HepG2 (cell line): ENCODE measurements at regions of chr3 and their contacts with region 1.

Region 1: DNA sequence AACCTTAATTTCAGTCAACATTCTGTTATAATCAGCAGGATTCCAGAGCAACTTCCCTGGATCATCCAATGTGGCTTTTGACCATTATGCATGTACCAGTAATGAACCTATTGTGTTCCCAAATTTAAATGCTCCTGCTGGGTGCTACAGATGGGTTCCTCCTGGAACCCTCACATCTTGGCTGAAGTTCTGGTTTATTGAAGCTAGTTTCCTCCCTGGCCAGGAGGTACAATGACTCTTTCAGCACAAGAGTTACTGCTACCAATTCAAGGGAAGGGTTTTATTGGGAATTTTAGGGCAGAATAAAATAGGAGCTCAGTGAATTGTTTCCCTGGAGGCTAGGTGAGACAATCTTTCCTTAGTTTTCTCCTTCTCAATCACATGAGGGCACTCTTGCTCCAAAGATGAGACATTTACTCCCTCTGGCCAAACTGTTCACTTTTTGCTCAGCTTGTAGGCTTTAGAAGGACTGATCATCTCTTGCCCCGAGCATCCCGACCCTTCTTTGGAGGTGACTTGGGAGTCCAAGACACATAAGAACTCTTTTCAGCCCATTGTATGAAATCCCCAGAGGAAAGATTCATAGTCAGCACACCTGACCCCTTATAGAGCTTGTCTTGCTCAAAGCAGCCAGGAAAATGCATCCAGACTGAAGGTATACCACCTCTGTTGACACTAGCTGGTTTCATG is 8.8 kb upstream of the NPHP3 start:
- DNase-seq: peak; percentile 33
- ATAC-seq: peak; percentile 84
- H3K4me3 ChIP-seq: no peak overlapping the region
- H3K27ac ChIP-seq: no peak overlapping the region
- H3K4me1 ChIP-seq: no peaks in the 10 kb centered on the region
- H3K27me3 ChIP-seq: no peaks in the 10 kb centered on the region; a peak in 1 of 5 replicates
- CTCF ChIP-seq: peak; percentile 69
- EP300 ChIP-seq: no peak
- POLR2A ChIP-seq: no peak
- RAD21 ChIP-seq: peak; percentile 58

Region 2: DNA sequence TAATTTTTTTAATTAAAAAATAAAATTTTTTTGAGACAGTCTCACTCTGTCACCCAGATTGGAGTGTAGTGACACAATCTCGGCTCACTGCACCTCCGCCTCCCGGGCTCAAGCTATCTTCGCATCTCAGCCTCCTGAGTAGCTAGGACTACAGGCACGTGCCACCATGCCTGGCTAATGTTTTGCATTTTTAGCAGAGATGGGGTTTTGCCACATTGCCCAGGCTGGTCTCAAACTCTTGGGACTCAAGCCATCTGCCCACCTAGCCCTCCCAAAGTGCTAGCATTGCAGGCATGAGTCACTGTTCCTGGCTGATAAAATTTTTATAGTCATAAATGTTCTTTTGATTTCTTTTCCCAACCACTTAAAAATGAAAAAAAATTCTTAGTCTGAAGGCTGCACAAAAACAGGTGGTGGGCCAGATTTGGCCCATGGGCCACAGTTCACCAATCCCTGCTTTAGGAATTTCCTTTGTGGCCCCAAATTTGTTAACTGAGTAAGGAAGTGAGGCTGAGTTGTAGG is 61.7 kb before region 1 on chr3:
- CTCF ChIA-PET with region 1: no interaction called
- POLR2A ChIA-PET with region 1: no interaction called
- in situ Hi-C with region 1: no loop called
- intact Hi-C with region 1: no loop called
- DNase-seq: no peak
- ATAC-seq: no peak
- H3K4me3 ChIP-seq: no peak overlapping the region
- H3K27ac ChIP-seq: no peak overlapping the region
- H3K4me1 ChIP-seq: peaks cover 23% of the 10 kb centered on the region
- H3K27me3 ChIP-seq: no peaks in the 10 kb centered on the region; a peak in 1 of 5 replicates
- CTCF ChIP-seq: no peak
- EP300 ChIP-seq: no peak
- POLR2A ChIP-seq: no peak
- RAD21 ChIP-seq: no peak

Region 3: DNA sequence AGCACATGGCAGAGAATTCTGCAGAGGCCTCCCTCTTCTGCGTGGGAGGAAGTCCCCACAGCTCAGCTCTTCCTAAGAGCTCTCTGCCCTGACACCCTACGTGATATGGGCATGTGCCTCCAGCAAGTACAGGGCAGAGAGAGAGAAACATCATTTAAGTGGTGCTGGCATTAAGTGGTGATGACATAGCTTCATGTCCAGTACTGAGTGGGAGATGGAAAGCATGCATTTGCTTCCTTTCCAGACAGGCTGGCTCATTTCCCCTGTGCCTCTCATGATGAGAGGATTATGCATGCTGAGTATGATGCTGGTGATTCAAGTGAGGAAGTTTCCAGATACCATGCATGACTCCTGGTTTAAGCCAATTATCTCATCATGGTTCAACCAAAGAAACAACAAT is 695.7 kb after region 1 on chr3:
- CTCF ChIA-PET with region 1: interaction called, 6 read pairs
- POLR2A ChIA-PET with region 1: no interaction called
- in situ Hi-C with region 1: loop called (anchors 5 kb)
- intact Hi-C with region 1: loop called (anchors 2 kb)
- DNase-seq: no peak
- ATAC-seq: no peak
- H3K4me3 ChIP-seq: no peak overlapping the region
- H3K27ac ChIP-seq: no peak overlapping the region
- H3K4me1 ChIP-seq: peaks cover 14% of the 10 kb centered on the region
- H3K27me3 ChIP-seq: peaks cover 0 to 3% of the 10 kb centered on the region in 2 experiments; a peak in 1 of 5 replicates
- CTCF ChIP-seq: no peak
- EP300 ChIP-seq: no peak
- POLR2A ChIP-seq: no peak
- RAD21 ChIP-seq: no peak